ENCODE measurements at regions of chr7 and their contacts with region 1.

Region 1: DNA sequence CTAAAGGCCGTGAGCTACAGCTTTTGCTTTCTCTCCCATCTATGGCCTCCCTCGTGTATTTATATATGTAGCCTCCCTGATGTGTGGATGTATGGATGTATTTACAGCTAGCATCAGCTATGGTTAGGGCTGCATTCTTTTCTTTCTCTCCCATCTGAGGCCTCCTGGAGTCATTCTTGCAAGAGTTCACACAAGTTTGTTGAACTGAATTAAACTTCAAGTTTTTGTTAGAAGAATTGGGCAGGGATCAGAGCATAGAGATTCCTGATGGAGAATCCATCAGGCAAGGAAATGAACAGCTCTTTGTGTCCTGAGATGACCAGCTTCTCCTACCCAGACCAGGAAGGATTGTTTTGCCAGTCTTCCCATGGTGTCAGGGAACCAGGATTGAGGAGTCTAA is 60.3 kb downstream of the AHCYL2 start:
- DNase-seq: no peak
- H3K4me3 ChIP-seq: no peak overlapping the region
- H3K27ac ChIP-seq: no peak overlapping the region
- H3K27me3 ChIP-seq: no peaks in the 10 kb centered on the region
- CTCF ChIP-seq: no peak

Region 2: GRCh38 chr7:129298268-129298893 is 13.3 kb after region 1 on chr7:
- CTCF ChIA-PET with region 1: interaction called, 11 read pairs
- POLR2A ChIA-PET with region 1: no interaction called
- DNase-seq: no peak
- H3K4me3 ChIP-seq: no peak overlapping the region
- H3K27ac ChIP-seq: no peak overlapping the region
- H3K27me3 ChIP-seq: no peaks in the 10 kb centered on the region
- CTCF ChIP-seq: peak; percentile 82

Region 3: GRCh38 chr7:129522088-129522970 is 237.2 kb after region 1 on chr7:
- CTCF ChIA-PET with region 1: no interaction called
- POLR2A ChIA-PET with region 1: no interaction called
- DNase-seq: no peak
- H3K4me3 ChIP-seq: no peak overlapping the region
- H3K27ac ChIP-seq: no peak overlapping the region
- H3K27me3 ChIP-seq: peaks cover 20% of the 10 kb centered on the region
- CTCF ChIP-seq: no peak

Region 4: GRCh38 chr7:129767120-129768015 is 482.3 kb after region 1 on chr7:
- CTCF ChIA-PET with region 1: no interaction called
- POLR2A ChIA-PET with region 1: no interaction called
- DNase-seq: no peak
- H3K4me3 ChIP-seq: no peak overlapping the region
- H3K27ac ChIP-seq: no peak overlapping the region
- H3K27me3 ChIP-seq: peaks cover 14% of the 10 kb centered on the region
- CTCF ChIP-seq: no peak

Measured in AG04450 (cell line).